Gastrocnemius medialis (tissue), 4 donors: ENCODE measurements at regions of chr1 and their contacts with region 1.

Region 1: DNA sequence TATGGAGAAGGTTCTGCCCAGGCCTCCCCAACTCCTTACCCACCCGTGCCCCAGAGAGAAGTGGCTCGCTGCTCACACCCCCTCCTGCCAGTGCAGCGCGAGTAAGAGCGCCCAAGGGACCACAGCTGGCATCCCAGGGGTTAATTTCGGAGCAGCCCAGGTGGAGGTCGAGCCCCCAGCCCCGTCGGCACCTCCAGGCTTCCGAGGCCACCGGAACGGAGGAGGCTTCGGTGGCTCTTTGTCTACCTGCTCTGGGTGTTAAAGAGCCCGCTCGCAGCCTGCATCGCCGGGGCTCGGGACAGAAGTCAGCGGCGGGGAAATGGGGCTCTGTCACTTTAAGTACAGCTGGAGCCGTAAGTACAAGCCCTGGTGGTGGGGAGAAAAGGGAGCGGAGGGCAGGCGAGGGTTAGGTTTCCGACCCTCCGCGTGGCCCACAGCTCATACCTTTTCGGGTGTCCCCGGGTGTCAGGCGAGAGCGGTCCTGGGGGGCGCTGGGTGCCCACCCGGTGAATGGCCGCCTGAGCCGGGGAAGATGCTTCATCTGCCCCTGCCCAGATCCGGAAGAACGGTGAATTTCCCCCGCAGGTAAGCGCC is 89.4 kb upstream of the IPO9 start:
- DNase-seq: peak in 1 of 2 donors; percentile 32
- ATAC-seq: peak; percentile 55 to 64
- H3K4me3 ChIP-seq: peak overlapping the region; percentile 57 to 87 (median 62)
- H3K27ac ChIP-seq: peak overlapping the region; percentile 67 to 74 (median 70)
- H3K4me1 ChIP-seq: peaks cover 46 to 56% of the 10 kb centered on the region in 2 donors
- H3K27me3 ChIP-seq: peaks cover 12 to 19% (median 18%) of the 10 kb centered on the region in 3 donors
- CTCF ChIP-seq: no peak
- POLR2A ChIP-seq: no peak

Region 2: GRCh38 chr1:201715801-201716741 is 23.5 kb before region 1 on chr1:
- in situ Hi-C with region 1: no loop called
- intact Hi-C with region 1: loop called (anchors 2 kb)
- DNase-seq: no peak
- ATAC-seq: no peak
- H3K4me3 ChIP-seq: no peak overlapping the region
- H3K27ac ChIP-seq: peak overlapping the region; percentile 75 to 85 (median 80)
- H3K4me1 ChIP-seq: peaks cover 71 to 89% of the 10 kb centered on the region in 2 donors
- H3K27me3 ChIP-seq: no peaks in the 10 kb centered on the region
- CTCF ChIP-seq: no peak
- POLR2A ChIP-seq: no peak

Region 3: DNA sequence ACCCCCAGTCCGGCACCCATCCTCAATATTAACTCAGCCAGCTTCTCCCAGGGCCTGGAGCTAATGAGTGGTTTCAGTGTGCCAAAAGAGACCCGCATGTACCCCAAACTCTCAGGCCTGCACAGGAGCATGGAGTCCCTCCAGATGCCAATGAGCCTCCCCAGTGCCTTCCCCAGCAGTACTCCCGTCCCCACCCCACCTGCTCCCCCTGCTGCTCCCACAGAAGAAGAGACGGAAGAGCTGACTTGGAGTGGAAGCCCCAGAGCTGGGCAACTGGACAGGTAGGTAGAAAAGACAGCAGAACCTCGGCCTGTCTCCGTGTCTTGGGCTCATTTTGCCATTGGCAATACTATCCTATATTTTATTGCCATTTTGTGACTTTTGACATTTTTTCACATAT is 44.0 kb after region 1 on chr1:
- in situ Hi-C with region 1: no loop called
- intact Hi-C with region 1: loop called (anchors 5 kb)
- DNase-seq: no peak
- ATAC-seq: no peak
- H3K4me3 ChIP-seq: no peak overlapping the region
- H3K27ac ChIP-seq: no peak overlapping the region
- H3K4me1 ChIP-seq: peaks cover 0 to 3% of the 10 kb centered on the region in 2 donors
- H3K27me3 ChIP-seq: no peaks in the 10 kb centered on the region
- CTCF ChIP-seq: no peak
- POLR2A ChIP-seq: no peak

Region 4: GRCh38 chr1:202656951-202657646 is 917.5 kb after region 1 on chr1:
- in situ Hi-C with region 1: no loop called
- intact Hi-C with region 1: no loop called
- DNase-seq: no peak
- ATAC-seq: no peak
- H3K4me3 ChIP-seq: no peak overlapping the region
- H3K27ac ChIP-seq: no peak overlapping the region
- H3K4me1 ChIP-seq: no peaks in the 10 kb centered on the region
- H3K27me3 ChIP-seq: peaks cover 2 to 16% (median 7%) of the 10 kb centered on the region in 3 donors
- CTCF ChIP-seq: no peak
- POLR2A ChIP-seq: no peak